ENCODE measurements at regions of chr3 and their contacts with region 1.

Region 1: DNA sequence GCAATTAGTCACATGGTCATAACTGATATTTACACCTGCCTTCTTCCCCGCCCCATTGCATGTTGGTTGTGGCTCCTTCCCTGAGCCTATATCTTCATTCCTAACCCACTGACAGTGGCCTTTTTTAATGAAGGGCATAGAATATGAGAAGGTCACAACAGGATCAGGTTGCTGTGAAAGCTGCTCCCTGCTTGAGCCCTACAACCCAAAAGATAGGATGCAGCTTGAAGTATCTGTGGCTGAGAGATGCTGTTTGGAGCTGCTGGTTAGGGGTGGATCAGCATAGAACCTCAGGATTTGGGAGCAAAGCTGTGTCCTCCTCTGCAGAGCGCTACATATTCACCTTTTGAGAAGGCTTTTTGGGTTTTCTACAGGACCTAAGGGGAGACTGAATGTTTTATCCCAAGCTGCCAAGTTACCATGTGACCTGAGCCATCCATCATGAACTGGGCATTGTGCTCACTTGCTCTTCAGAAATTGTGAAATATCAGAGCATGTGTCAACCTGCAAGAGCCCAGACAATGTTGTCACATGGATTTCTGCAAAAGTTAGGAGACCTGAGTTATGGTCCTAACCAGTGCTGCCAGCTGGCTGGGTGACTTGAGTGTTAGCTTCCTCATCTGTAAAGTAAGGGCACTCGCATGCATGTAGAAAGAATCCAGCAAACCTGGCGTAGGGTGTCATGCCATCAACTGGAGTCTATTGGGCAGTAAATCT is 49.8 kb upstream of the ARL8B start:
- DNase-seq: no peak
- H3K4me3 Mint-ChIP-seq: no peak overlapping the region
- H3K27ac Mint-ChIP-seq: no peak overlapping the region
- H3K4me1 Mint-ChIP-seq: no peaks in the 10 kb centered on the region
- H3K27me3 Mint-ChIP-seq: peaks cover 23% of the 10 kb centered on the region

Region 2: DNA sequence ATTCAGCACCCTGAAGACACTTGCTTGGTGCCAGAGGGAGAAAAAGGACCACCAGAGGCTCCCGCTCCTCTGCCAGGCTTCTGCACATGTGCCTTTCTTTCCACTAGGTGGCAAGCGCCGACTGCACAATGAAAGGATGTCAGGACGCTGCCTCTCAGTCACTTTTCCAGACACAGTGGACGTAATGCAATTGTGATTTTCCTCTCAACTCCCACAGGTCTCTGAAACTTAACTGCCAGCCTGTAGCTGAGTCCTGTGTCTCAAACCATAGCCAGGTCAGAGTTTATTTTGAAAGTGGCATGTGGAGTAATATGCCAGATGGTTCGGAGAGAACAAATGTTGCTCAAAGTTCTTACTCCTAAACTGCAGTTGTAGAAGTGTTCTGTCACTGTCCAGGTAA is 416.2 kb before region 1 on chr3:
- intact Hi-C with region 1: no loop called
- DNase-seq: no peak
- H3K4me3 Mint-ChIP-seq: no peak overlapping the region
- H3K27ac Mint-ChIP-seq: no peak overlapping the region
- H3K4me1 Mint-ChIP-seq: no peaks in the 10 kb centered on the region
- H3K27me3 Mint-ChIP-seq: no peaks in the 10 kb centered on the region

Region 3: DNA sequence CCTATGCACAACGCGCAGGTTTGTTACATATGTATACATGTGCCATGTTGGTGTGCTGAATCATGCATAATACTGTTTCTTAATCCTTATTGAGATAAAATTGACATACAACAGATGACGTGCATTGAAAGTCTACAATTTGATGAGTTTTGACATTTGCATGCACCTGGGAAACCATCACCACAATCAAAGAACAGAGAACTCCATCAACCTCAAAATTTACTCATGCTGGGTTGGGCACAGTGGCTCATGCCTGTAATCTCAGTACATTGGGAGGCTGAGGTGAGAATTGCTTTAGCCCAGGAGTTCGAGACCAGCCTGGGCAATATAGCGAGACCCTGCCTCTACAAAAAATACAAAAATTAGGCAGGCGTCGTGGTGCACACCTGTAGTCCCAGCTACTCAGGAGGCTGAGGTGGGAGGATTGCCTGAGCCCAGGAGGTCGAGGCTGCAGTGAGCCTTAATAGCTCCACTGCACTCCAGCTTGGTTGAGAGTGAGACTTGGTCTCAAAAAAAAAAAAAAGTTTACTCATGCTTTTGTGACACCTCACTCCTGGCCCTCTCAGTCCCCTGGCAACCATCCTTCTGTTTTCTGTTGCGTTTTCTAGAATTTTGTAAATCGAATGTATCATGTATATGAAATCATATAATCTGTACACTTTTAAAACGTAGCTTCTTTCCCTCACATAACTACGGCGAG is 36.4 kb before region 1 on chr3:
- intact Hi-C with region 1: loop called (anchors 2 kb)
- DNase-seq: no peak
- H3K4me3 Mint-ChIP-seq: no peak overlapping the region
- H3K27ac Mint-ChIP-seq: no peak overlapping the region
- H3K4me1 Mint-ChIP-seq: peaks cover 40% of the 10 kb centered on the region
- H3K27me3 Mint-ChIP-seq: no peaks in the 10 kb centered on the region

Region 4: DNA sequence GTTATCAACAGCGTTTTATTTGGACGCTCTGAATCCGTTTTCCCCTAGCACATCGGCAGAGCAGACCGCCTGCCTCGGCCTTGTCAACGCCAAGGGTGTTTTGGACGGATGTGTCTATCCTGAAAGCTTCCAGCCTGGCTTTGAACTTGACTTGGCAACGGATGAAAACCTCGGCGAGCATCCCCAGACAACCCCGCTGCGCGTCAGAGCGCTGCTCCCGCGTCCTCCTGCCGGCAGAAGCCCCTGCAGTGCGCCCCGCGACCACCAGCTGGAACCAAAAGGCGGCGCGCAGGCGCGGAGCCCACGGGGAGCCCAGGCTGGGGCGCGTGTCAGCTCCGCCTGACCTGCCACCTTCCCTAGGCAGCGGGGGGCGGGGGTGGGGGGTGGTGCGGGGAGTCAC is 23.6 kb after region 1 on chr3:
- intact Hi-C with region 1: no loop called
- DNase-seq: no peak
- H3K4me3 Mint-ChIP-seq: no peak overlapping the region
- H3K27ac Mint-ChIP-seq: no peak overlapping the region
- H3K4me1 Mint-ChIP-seq: peaks cover 3% of the 10 kb centered on the region
- H3K27me3 Mint-ChIP-seq: peaks cover 42% of the 10 kb centered on the region

Region 5: GRCh38 chr3:5330152-5330810 is 258.0 kb after region 1 on chr3:
- intact Hi-C with region 1: no loop called
- DNase-seq: no peak
- H3K4me3 Mint-ChIP-seq: no peak overlapping the region
- H3K27ac Mint-ChIP-seq: peak overlapping the region; percentile 4
- H3K4me1 Mint-ChIP-seq: peaks cover 8% of the 10 kb centered on the region
- H3K27me3 Mint-ChIP-seq: no peaks in the 10 kb centered on the region